AG04450 (cell line): ENCODE measurements at regions of chr1 and their contacts with region 1.

Region 1: GRCh38 chr1:169809370-169810095 is 14.8 kb upstream of the METTL18 start:
- DNase-seq: peak; percentile 4
- H3K4me3 ChIP-seq: no peak overlapping the region
- H3K27ac ChIP-seq: no peak overlapping the region
- H3K27me3 ChIP-seq: no peaks in the 10 kb centered on the region
- CTCF ChIP-seq: peak; percentile 48

Region 2: DNA sequence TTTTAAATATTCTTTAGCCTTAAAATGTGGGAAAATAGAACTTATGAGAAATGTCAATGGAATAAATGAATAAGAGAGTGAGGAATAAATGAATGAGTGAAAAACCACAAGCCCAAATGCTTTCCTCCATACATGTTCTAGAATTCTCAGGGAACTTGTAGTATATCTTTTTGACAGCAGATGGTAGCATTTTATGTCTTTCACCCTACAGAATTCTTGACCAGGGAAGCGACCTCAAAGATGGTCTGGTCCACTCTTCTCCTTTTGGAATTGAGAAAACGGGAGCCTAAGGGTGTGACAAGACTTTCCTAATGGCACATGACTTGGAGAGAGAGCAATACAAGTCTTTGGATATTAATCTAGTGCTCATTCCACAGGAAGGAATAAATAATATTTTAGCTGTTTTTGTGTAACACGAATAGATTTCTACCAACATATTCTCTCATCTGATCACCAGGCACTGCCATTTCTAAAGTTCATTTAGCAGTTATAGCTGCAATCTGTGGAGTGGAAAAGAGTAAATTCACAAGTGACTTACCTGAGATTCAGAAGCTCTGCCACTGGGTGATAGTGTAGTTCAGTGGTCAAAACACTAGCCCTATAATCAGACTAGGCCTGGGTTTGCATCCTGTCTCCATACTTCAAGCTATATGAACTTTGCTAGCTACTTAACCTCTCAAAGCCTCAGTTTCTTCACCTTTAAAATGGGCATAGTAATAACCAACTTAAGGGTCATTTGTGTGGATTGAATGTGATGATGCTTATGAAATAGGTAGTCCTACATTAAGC is 208.2 kb before region 1 on chr1:
- CTCF ChIA-PET with region 1: interaction called, 37 read pairs
- POLR2A ChIA-PET with region 1: no interaction called
- DNase-seq: no peak
- H3K4me3 ChIP-seq: no peak overlapping the region
- H3K27ac ChIP-seq: no peak overlapping the region
- H3K27me3 ChIP-seq: no peaks in the 10 kb centered on the region
- CTCF ChIP-seq: peak; percentile 37; the same call in 1 of the 2 replicates

Region 3: GRCh38 chr1:169794530-169795416 is 14.8 kb before region 1 on chr1 and contains the start of gene METTL18:
- CTCF ChIA-PET with region 1: interaction called, 18 read pairs
- POLR2A ChIA-PET with region 1: no interaction called
- DNase-seq: peak; percentile 86
- H3K4me3 ChIP-seq: peak within 1 kb of the TSS; percentile 88
- H3K27ac ChIP-seq: peak within 1 kb of the TSS; percentile 73
- H3K27me3 ChIP-seq: no peaks in the 10 kb centered on the region
- CTCF ChIP-seq: no peak
- polyA plus RNA-seq, gene METTL18: 4.4 and 7.1 TPM in 2 replicates

Region 4: DNA sequence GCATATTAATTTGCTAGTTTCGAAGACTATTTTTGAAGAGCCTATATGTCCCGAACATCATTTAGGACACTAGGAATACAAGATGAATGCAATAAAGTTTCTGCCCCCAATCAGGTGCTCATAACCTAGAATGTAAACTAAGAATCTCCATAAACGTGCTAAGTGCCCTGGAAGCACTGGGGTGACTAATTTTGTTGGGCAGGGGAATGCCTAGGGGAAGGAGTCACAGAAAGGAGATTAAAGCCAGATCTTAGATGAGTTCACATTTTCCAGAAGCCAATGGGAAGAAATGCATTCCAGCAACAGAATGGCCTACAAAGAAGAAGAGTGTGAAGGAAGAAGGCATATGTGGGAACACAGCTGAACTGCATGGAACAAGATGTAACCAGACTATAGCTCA is 64.7 kb after region 1 on chr1:
- CTCF ChIA-PET with region 1: no interaction called
- POLR2A ChIA-PET with region 1: no interaction called
- DNase-seq: peak; percentile 45
- H3K4me3 ChIP-seq: no peak overlapping the region
- H3K27ac ChIP-seq: peak overlapping the region; percentile 55
- H3K27me3 ChIP-seq: no peaks in the 10 kb centered on the region
- CTCF ChIP-seq: no peak